Kidney (tissue), 22 donors: ENCODE measurements at regions of chr16 and their contacts with region 1.

Region 1: GRCh38 chr16:81723098-81723723 is 55.9 kb upstream of the PLCG2 start:
- DNase-seq: peak in 4 of 5 donors; percentile 9 to 93 (median 66)
- H3K4me3 ChIP-seq: no peak overlapping the region
- H3K27ac ChIP-seq: no peak overlapping the region
- H3K4me1 ChIP-seq: no peaks in the 10 kb centered on the region
- H3K27me3 ChIP-seq: no peaks in the 10 kb centered on the region
- CTCF ChIP-seq: peak; percentile 81

Region 2: DNA sequence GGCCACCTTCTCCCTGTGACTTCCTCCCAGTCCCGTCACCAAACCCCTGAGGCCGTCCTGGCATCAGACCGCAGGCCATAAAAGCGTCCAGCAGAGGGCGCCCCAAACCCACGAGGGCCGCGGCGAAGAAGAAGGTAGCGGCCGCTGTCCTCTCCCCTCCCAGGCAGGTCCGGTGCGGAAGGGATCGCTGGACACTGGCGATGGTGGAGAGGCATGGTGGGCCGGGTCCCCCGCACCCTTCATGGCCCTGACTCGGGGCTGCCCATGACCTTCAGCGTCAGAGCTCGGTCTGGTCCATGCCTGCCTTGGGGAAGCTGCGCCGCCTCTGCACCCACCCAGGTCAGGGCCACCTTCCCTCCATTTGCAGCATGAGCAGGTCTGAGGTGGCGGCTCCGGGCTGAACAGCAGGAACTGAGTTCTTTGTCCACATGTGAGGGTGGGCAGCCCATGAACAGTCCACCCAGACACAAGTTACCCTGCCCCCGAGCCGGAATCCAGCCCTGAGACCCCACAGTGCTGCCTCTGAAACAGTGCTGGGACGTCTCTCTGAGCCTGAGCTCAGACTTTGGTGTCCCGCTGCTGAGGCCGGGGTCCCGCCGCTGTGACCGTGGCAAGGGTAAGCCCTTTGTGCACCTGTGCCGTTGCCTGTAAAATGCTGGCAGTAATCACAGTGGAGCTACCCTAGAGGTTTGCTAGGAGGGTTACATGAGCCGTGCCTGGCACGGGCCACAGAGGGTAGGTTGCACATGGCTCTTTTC is 319.4 kb before region 1 on chr16:
- intact Hi-C with region 1: loop called (anchors 5 kb)
- DNase-seq: peak; percentile 89 to 93 (median 92)
- H3K4me3 ChIP-seq: no peak overlapping the region
- H3K27ac ChIP-seq: no peak overlapping the region
- H3K4me1 ChIP-seq: peaks cover 0 to 3% (median 0%) of the 10 kb centered on the region in 3 donors
- H3K27me3 ChIP-seq: no peaks in the 10 kb centered on the region
- CTCF ChIP-seq: peak; percentile 98